Naive thymus-derived CD4-positive, alpha-beta T cell (primary cell): ENCODE measurements at regions of chr11 and their contacts with region 1.

Region 1: GRCh38 chr11:6389921-6390724 is at the start of gene SMPD1:
- DNase-seq: peak; percentile 85 to 94 (median 92)
- ATAC-seq: peak; percentile 97
- H3K4me3 ChIP-seq: peak within 1 kb of the TSS; percentile 94
- H3K4me3 Mint-ChIP-seq: peak within 1 kb of the TSS; percentile 91 to 98 (median 94)
- H3K27ac ChIP-seq: peak within 1 kb of the TSS; percentile 95
- H3K27ac Mint-ChIP-seq: peak within 1 kb of the TSS; percentile 93 to 100 (median 99)
- H3K4me1 ChIP-seq: peaks cover 25 to 53% of the 10 kb centered on the region in 2 donors
- H3K4me1 Mint-ChIP-seq: peaks cover 31 to 74% (median 66%) of the 10 kb centered on the region in 7 donors
- H3K27me3 ChIP-seq: no peaks in the 10 kb centered on the region
- H3K27me3 Mint-ChIP-seq: peaks cover 0 to 13% (median 0%) of the 10 kb centered on the region in 5 donors
- total RNA-seq, gene SMPD1: 43.0 to 70.9 (median 55.4) TPM

Region 2: DNA sequence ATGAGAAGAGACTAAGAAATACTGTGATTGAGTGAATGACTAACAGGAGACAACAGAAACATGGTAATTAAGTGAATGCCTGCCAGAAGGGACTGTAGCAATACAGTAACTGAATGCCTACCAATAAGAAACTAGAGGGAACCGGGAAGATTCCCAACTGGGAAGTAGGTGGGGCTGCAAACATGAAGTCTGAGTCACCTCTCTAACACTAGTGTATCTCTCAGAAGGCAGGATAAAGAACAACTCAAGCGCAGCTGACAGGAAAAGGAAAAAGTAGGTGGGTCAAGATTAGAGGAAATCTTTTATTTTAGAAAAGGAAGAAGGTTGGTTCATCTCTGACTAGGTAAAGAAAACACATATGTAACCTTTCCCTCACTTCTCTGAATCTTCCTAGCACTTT is 170.8 kb before region 1 on chr11:
- CTCF ChIA-PET with region 1: no interaction called
- POLR2A ChIA-PET with region 1: no interaction called
- intact Hi-C with region 1: no loop called
- DNase-seq: no peak
- ATAC-seq: peak; percentile 34
- H3K4me3 ChIP-seq: no peak overlapping the region
- H3K4me3 Mint-ChIP-seq: peak overlapping the region in 4 of 10 donors; percentile 4 to 55 (median 38)
- H3K27ac ChIP-seq: no peak overlapping the region
- H3K27ac Mint-ChIP-seq: peak overlapping the region in 8 of 9 donors; percentile 22 to 76 (median 44)
- H3K4me1 ChIP-seq: peaks cover 0 to 7% of the 10 kb centered on the region in 2 donors
- H3K4me1 Mint-ChIP-seq: peaks cover 16 to 27% (median 23%) of the 10 kb centered on the region in 7 donors
- H3K27me3 ChIP-seq: no peaks in the 10 kb centered on the region
- H3K27me3 Mint-ChIP-seq: no peaks in the 10 kb centered on the region

Region 3: GRCh38 chr11:6402561-6402981 is 12.4 kb after region 1 on chr11:
- CTCF ChIA-PET with region 1: interaction called, 19 read pairs
- POLR2A ChIA-PET with region 1: interaction called, 525 read pairs
- intact Hi-C with region 1: loop called (anchors 1 kb)
- DNase-seq: peak in 8 of 9 donors; percentile 69 to 99 (median 97)
- ATAC-seq: peak; percentile 92
- H3K4me3 ChIP-seq: peak overlapping the region; percentile 52
- H3K4me3 Mint-ChIP-seq: peak overlapping the region; percentile 74 to 94 (median 90)
- H3K27ac ChIP-seq: peak overlapping the region; percentile 80
- H3K27ac Mint-ChIP-seq: peak overlapping the region; percentile 94 to 100 (median 97)
- H3K4me1 ChIP-seq: peaks cover 53 to 83% of the 10 kb centered on the region in 2 donors
- H3K4me1 Mint-ChIP-seq: peaks cover 63 to 100% (median 87%) of the 10 kb centered on the region in 7 donors
- H3K27me3 ChIP-seq: no peaks in the 10 kb centered on the region
- H3K27me3 Mint-ChIP-seq: peaks cover 0 to 5% (median 0%) of the 10 kb centered on the region in 5 donors

Region 4: DNA sequence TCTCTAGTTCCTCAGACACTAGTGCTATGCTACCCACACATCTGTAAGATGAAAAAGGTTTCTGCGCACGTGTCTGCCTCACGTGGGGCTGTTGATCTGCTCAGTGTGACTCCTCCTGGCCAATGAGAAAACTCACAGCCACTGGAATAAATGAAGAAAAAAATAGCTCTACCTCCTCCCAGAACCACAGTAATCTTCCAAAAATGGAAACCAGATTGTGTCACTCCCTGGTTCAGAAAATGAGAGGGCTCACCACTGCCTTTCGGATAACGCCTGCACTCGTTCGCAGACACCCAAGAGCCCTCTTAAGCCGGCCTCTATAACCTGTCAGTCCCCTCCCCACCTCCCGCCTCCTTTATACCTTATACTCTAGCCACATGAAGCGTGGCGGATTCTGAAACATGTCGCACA is 23.7 kb after region 1 on chr11:
- CTCF ChIA-PET with region 1: interaction called, 11 read pairs
- POLR2A ChIA-PET with region 1: interaction called, 525 read pairs
- intact Hi-C with region 1: loop called in 1 of 2 experiments (anchors 1 kb)
- DNase-seq: peak in 7 of 9 donors; percentile 78 to 91 (median 88)
- ATAC-seq: peak; percentile 90
- H3K4me3 ChIP-seq: peak overlapping the region; percentile 28
- H3K4me3 Mint-ChIP-seq: no peak overlapping the region
- H3K27ac ChIP-seq: peak overlapping the region; percentile 74
- H3K27ac Mint-ChIP-seq: no peak overlapping the region
- H3K4me1 ChIP-seq: peaks cover 31 to 81% of the 10 kb centered on the region in 2 donors
- H3K4me1 Mint-ChIP-seq: peaks cover 0 to 36% (median 17%) of the 10 kb centered on the region in 7 donors
- H3K27me3 ChIP-seq: no peaks in the 10 kb centered on the region
- H3K27me3 Mint-ChIP-seq: no peaks in the 10 kb centered on the region

Region 5: GRCh38 chr11:6419009-6419631 is 29.0 kb after region 1 on chr11 and contains the start of gene APBB1:
- CTCF ChIA-PET with region 1: interaction called, 11 read pairs
- POLR2A ChIA-PET with region 1: interaction called, 525 read pairs
- intact Hi-C with region 1: loop called (anchors 1 kb)
- DNase-seq: peak; percentile 71 to 87 (median 81)
- ATAC-seq: peak; percentile 89
- H3K4me3 ChIP-seq: peak within 1 kb of the TSS; percentile 79
- H3K4me3 Mint-ChIP-seq: peak within 1 kb of the TSS in 7 of 10 donors; percentile 78 to 92 (median 85)
- H3K27ac ChIP-seq: peak within 1 kb of the TSS; percentile 92
- H3K27ac Mint-ChIP-seq: peak within 1 kb of the TSS; percentile 47 to 92 (median 89)
- H3K4me1 ChIP-seq: peaks cover 27 to 46% of the 10 kb centered on the region in 2 donors
- H3K4me1 Mint-ChIP-seq: peaks cover 2 to 18% (median 14%) of the 10 kb centered on the region in 7 donors
- H3K27me3 ChIP-seq: no peaks in the 10 kb centered on the region
- H3K27me3 Mint-ChIP-seq: peaks cover 0 to 36% (median 11%) of the 10 kb centered on the region in 5 donors
- total RNA-seq, gene APBB1: 46.9 to 188 (median 154) TPM

Region 6: DNA sequence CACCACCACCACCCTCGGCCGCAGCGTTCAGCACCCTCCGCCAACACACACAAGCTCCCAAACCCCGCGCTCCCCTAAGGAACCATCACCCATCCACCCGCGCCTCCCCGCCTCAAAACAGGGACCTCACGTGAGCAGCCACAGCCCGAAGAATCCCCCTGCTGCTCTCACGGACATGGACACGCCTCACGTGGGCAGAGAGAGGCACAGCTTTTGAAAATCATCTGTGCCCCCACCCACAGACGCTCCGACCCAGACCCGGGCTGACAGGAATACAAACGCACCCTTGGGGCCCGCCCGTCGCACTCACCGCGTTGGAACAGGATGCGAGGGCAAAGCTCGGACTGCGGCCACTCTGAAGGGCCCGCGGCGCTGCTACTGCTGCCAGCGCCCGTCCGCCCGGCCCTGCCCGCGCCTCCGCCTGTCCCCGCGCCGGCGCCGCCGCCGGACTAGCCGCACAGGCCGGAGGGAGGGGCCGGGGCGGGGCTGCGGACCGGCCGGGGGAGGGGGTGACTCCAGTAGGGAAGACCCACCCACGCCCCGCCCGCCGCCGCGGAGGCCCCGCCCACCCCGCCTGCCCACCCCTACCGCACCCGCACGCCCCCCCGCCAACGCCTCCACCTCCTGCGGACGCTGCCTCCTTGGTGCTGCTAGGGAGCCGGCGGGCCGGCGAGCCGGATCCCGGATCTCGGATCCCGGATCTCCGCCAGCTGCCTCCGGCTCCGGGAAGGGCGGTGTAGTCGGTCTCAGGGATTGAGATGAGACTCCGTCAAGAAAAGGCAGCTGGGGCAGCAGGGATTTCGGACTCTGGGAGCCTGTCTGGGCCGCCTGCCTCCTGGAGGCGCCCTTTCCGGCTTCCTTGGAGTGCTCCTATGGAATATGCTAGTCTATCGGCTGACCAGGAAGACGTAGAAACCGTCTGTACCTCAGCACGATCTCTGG is 83.6 kb after region 1 on chr11 and contains the start of gene TRIM3:
- CTCF ChIA-PET with region 1: no interaction called
- POLR2A ChIA-PET with region 1: interaction called, 5 read pairs
- intact Hi-C with region 1: loop called in 1 of 2 experiments (anchors 1 kb)
- DNase-seq: peak; percentile 16 to 68 (median 44)
- ATAC-seq: peak; percentile 86
- H3K4me3 ChIP-seq: peak within 1 kb of the TSS; percentile 56
- H3K4me3 Mint-ChIP-seq: peak within 1 kb of the TSS; percentile 78 to 90 (median 86)
- H3K27ac ChIP-seq: peak within 1 kb of the TSS; percentile 71
- H3K27ac Mint-ChIP-seq: peak within 1 kb of the TSS; percentile 40 to 90 (median 88)
- H3K4me1 ChIP-seq: peaks cover 7 to 11% of the 10 kb centered on the region in 2 donors
- H3K4me1 Mint-ChIP-seq: peaks cover 12 to 31% (median 20%) of the 10 kb centered on the region in 7 donors
- H3K27me3 ChIP-seq: no peaks in the 10 kb centered on the region
- H3K27me3 Mint-ChIP-seq: peaks cover 0 to 10% (median 0%) of the 10 kb centered on the region in 5 donors
- total RNA-seq, gene TRIM3: 8.1 to 20.7 (median 17.2) TPM

Region 7: DNA sequence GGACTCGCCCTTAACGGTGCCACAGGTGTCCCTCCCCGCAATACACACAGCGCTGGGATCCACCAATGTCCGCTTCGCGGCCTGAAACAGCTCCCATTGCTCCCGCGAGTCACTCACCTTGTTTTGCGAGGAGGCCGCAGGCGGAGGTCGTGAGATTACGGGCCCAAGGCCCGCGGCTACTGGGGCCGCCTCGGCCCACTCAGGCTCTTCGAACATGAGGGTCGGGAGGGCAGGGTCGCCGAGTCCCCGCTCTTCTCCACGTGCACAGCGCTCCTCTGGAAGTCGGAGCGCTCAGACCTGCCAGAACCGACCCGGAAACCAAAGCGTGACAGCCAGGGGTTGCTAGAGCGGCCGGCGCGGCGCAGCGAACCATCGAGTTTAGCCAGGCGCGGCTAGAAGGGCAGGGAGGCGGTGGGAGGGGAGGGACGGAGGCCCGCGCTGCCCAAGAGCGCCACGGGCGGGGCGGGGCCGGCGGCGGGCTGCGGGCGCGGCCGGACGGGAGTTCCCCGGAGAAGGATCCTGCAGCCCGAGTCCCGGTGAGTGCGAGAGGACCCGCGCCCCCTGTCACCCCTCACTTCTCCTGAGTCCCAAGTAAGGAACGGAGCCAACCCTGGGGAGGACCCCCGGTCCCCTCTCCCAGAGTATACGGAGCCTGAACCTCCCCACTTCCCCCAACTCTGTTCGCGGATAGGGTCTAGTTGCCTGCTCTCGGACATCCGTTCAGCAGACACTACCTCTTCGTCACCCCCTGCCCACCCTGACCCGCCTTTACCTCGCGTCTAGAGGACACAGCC is 213.4 kb after region 1 on chr11 and contains the starts of genes ILK and RRP8:
- CTCF ChIA-PET with region 1: no interaction called
- POLR2A ChIA-PET with region 1: no interaction called
- intact Hi-C with region 1: loop called (anchors 1 kb)
- DNase-seq: peak; percentile 69 to 86 (median 78)
- ATAC-seq: peak; percentile 92
- H3K4me3 ChIP-seq: peak within 1 kb of the TSS; percentile 85
- H3K4me3 Mint-ChIP-seq: no peak within 1 kb of the TSS
- H3K27ac ChIP-seq: peak within 1 kb of the TSS; percentile 86
- H3K27ac Mint-ChIP-seq: no peak within 1 kb of the TSS
- H3K4me1 ChIP-seq: peaks cover 51% of the 10 kb centered on the region in 2 donors
- H3K4me1 Mint-ChIP-seq: peaks cover 9 to 33% (median 21%) of the 10 kb centered on the region in 7 donors
- H3K27me3 ChIP-seq: no peaks in the 10 kb centered on the region
- H3K27me3 Mint-ChIP-seq: no peaks in the 10 kb centered on the region
- total RNA-seq, gene ILK: 34.4 to 165 (median 89.6) TPM
- total RNA-seq, gene RRP8: 21.4 to 37.9 (median 27.9) TPM

Region 8: DNA sequence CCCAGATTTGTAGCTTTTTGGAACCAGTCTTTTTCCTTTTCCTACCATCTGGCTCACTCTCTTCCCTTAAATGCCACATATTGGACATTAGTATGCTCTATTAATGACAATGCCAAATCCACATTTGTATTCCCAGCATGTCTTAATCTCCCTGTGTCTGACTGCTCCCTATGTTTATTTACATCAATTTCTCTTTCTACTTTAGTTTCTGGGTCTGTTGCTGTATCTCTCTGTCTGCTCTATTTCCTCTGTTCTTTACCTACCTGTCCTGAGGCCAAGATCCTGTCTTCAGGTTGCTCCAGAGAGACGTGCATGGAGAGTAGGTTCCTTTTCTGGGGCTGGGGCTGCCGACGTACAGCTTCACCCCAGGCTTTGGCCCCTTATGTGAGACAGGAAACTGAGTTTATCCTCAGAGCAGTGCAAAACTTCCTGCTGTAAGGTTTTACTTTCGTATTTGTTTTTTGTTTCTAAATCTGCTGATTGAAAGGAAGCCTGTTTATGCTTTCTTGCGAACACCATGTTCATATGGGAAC is 356.0 kb after region 1 on chr11:
- CTCF ChIA-PET with region 1: no interaction called
- POLR2A ChIA-PET with region 1: no interaction called
- intact Hi-C with region 1: loop called (anchors 5 kb)
- DNase-seq: peak in 8 of 9 donors; percentile 32 to 66 (median 64)
- ATAC-seq: peak; percentile 89
- H3K4me3 ChIP-seq: peak overlapping the region; percentile 80
- H3K4me3 Mint-ChIP-seq: no peak overlapping the region
- H3K27ac ChIP-seq: peak overlapping the region; percentile 85
- H3K27ac Mint-ChIP-seq: no peak overlapping the region
- H3K4me1 ChIP-seq: peaks cover 18 to 37% of the 10 kb centered on the region in 2 donors
- H3K4me1 Mint-ChIP-seq: peaks cover 26 to 48% (median 29%) of the 10 kb centered on the region in 7 donors
- H3K27me3 ChIP-seq: no peaks in the 10 kb centered on the region
- H3K27me3 Mint-ChIP-seq: no peaks in the 10 kb centered on the region